ENCODE measurements at regions of chr17 and their contacts with region 1.

Region 1: GRCh38 chr17:77494664-77495435 is 354.1 kb downstream of the SEC14L1 start:
- DNase-seq: peak; percentile 90

Region 2: GRCh38 chr17:77096570-77097214 is 398.2 kb before region 1 on chr17:
- intact Hi-C with region 1: loop called (anchors 10 kb)
- DNase-seq: no peak

Region 3: DNA sequence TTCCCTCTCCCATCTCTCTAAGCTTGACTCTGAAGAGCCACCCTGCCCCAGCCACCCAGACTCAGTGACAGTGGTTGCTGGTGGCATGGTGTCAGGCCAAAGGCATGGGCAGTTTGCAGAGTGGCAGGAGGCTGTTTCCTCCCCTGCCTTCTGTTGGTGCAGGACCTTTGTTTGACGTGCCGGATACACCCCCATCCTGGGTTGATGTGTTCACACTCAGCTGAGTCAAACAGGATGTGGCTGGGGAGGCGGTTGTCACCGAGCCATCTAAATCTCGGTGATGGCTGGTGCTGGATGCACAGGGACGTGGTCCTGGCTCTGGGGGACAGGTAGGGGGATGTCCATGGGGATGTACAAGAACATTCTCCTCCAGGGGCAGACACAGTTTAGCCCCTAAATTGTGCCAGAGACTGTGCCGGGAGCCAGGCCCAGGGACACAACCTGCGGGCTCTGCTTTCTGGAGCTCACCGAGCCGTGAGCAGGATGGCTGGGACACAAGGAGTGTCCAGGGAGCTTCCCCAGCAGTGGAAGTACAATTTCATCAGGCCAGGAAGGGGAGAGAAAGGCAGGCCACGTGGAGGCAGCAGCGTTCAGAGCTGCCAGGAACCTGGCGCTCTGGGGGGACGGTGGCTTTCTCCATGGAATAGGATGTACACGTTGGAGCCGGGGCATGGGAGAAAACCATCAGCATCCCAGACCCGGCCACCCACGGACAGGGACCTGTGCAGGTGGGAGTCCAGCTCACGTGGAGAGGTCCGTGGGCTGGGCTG is 89.9 kb before region 1 on chr17:
- intact Hi-C with region 1: loop called (anchors 5 kb)
- DNase-seq: peak; percentile 91